ENCODE measurements at regions of chr12 and their contacts with region 1.

Region 1: DNA sequence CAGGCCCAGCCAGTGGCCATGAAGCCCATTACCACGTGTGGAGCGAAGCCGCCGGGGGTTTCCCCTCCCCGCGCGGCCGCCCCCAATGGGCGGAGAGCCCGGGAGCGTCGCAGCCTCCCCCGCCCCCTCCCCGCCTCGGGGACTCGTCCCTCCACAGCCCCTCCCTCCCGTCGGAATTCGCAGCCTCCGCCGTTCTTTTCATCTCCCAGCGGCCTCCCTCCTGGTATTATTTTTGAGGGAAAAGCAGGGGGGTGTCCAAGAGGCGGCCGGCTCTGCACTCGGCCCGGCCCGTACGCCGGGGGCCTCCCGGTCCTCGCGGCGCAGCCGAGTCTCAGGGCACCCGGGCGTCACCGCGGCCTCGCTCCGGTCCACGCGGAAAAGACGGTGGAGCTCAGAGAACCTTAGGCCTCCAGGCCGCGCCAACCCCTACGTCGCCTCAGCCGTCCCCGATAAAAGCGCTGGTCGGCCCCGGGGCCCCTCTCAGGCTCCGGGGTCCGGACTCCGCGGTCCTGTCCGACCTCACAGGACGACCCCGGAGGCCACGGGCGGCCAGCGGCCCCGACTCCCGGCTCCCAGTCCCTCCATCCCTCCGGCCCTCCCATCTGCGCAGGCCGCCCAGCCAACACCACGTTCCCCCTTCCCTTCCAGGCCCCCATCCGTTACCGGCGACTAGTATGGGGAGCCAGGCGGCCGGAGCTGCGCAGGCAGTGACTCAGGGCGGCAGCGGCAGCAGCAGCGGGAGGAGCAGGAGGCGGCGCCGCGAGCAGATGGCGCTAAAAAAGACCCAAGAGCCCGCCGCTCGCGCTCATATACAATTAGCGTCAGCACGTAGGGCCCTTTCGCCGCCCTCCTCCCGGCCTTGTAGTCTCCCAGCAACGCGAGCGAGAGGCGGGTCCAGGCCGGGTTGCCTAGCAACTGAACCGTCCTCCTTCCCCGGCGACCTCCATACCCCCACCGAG is at the start of gene NAP1L1:
- DNase-seq: peak; percentile 97
- H3K4me3 ChIP-seq: peak within 1 kb of the TSS; percentile 76 to 94
- H3K27ac ChIP-seq: peak within 1 kb of the TSS; percentile 96 to 99
- H3K4me1 ChIP-seq: no peaks in the 10 kb centered on the region
- H3K27me3 ChIP-seq: no peaks in the 10 kb centered on the region
- CTCF ChIP-seq: peak in 1 of 4 experiments; percentile 11
- POLR2A ChIP-seq: peak; percentile 93
- total RNA-seq, gene NAP1L1: 223 to 325 TPM

Region 2: GRCh38 chr12:76259660-76260389 is 175.6 kb after region 1 on chr12:
- intact Hi-C with region 1: loop called (anchors 2 kb)
- DNase-seq: peak; percentile 34
- H3K4me3 ChIP-seq: no peak overlapping the region
- H3K27ac ChIP-seq: peak overlapping the region; percentile 65 to 72
- H3K4me1 ChIP-seq: no peaks in the 10 kb centered on the region
- H3K27me3 ChIP-seq: no peaks in the 10 kb centered on the region
- CTCF ChIP-seq: no peak
- POLR2A ChIP-seq: no peak

Region 3: GRCh38 chr12:76586764-76587395 is 502.7 kb after region 1 on chr12:
- intact Hi-C with region 1: loop called (anchors 10 kb)
- DNase-seq: peak; percentile 10
- H3K4me3 ChIP-seq: no peak overlapping the region
- H3K27ac ChIP-seq: no peak overlapping the region
- H3K4me1 ChIP-seq: no peaks in the 10 kb centered on the region
- H3K27me3 ChIP-seq: no peaks in the 10 kb centered on the region
- CTCF ChIP-seq: peak in 3 of 4 experiments; percentile 54 to 62 (median 58)
- POLR2A ChIP-seq: no peak